ENCODE measurements at regions of chr15 and their contacts with region 1.

Region 1: DNA sequence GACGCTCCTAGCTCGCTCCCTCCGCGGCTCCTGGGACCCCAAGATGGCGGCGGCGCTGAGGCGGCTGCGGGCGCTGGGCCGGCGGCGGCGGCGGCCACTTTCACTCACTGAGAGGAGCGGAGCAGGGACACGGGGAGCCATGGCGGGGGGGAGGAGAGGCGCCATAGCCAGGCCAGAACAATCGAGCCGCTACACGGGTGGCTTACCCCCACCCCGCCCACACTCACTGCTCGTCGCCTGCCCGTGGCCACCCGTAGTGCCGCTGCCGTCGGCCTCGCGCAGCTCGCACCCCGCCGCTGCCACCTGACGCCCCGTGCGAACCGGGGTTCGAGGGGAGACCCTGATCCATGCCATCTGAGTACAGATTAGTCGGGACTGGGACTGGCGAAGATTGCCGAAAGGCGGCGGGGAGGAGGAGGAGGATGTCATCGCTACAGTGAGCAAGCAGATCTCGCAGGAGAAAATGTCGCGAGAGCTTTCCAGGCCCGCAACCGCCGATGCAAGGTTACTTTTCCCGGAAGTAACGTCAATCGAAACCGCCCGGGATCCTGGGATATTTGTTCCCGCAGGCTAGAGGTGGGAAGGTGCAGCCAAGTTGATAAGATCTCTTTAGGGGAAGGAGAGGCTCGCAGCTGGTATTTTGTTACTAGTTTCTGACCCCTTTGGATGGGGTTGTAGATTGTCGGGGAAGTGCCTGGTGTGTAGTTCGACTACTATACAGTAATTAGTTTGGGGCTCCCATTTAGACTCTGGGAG is at the start of gene INO80:
- DNase-seq: peak; percentile 93
- ATAC-seq: peak; percentile 70
- H3K4me3 Mint-ChIP-seq: peak within 1 kb of the TSS; percentile 97
- H3K27ac Mint-ChIP-seq: peak within 1 kb of the TSS; percentile 100
- H3K4me1 Mint-ChIP-seq: peaks cover 32% of the 10 kb centered on the region
- H3K27me3 Mint-ChIP-seq: no peaks in the 10 kb centered on the region
- CTCF ChIP-seq: no peak
- total RNA-seq, gene INO80: 34.8 and 38.8 TPM in 2 replicates

Region 2: GRCh38 chr15:40769274-40770146 is 346.8 kb before region 1 on chr15 and contains the start of gene C15orf62:
- CTCF ChIA-PET with region 1: no interaction called
- POLR2A ChIA-PET with region 1: no interaction called
- intact Hi-C with region 1: loop called (anchors 5 kb)
- DNase-seq: peak; percentile 81
- ATAC-seq: peak; percentile 84
- H3K4me3 Mint-ChIP-seq: peak within 1 kb of the TSS; percentile 82
- H3K27ac Mint-ChIP-seq: peak within 1 kb of the TSS; percentile 93
- H3K4me1 Mint-ChIP-seq: peaks cover 59% of the 10 kb centered on the region
- H3K27me3 Mint-ChIP-seq: no peaks in the 10 kb centered on the region
- CTCF ChIP-seq: no peak
- total RNA-seq, gene C15orf62: 5.7 and 6.5 TPM in 2 replicates

Region 3: DNA sequence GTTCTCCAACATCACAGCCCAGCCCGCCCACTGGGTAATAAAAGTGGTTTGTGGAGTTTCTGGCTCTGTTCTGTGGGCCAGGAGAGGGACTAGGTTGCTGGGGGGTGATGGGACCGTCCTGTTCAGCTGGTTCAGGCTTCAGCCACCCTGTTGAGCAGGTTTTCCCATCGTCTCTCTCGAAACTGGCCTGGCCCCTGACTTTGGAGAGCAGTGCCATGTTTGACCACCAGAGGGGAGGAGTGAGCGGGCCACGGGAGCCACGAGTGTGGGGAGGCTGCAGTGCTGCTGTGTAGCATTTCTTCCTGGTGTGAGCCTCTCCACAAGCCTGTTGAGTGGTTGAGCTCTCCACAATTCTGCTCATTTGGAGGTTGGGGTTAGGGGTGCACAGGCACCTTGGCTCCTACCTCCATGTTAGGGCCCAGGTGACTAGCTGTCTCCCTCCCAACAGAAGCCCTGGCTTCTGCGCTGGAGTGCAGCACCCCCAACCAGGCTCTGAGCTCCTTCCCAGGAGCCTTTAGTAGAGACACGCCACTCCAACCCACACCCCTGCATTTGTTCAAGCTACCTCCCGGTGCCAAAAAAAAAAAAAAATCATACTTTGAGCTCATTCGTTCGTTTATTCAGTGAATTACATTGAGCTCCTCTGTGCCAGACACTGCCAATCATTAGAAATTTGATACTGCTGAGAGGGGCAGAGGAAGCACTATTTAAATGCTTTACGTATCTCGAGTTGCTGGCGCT is 258.5 kb before region 1 on chr15:
- CTCF ChIA-PET with region 1: no interaction called
- POLR2A ChIA-PET with region 1: no interaction called
- intact Hi-C with region 1: no loop called
- DNase-seq: peak; percentile 80
- ATAC-seq: peak; percentile 98
- H3K4me3 Mint-ChIP-seq: no peak overlapping the region
- H3K27ac Mint-ChIP-seq: no peak overlapping the region
- H3K4me1 Mint-ChIP-seq: peaks cover 8% of the 10 kb centered on the region
- H3K27me3 Mint-ChIP-seq: no peaks in the 10 kb centered on the region
- CTCF ChIP-seq: no peak

Region 4: DNA sequence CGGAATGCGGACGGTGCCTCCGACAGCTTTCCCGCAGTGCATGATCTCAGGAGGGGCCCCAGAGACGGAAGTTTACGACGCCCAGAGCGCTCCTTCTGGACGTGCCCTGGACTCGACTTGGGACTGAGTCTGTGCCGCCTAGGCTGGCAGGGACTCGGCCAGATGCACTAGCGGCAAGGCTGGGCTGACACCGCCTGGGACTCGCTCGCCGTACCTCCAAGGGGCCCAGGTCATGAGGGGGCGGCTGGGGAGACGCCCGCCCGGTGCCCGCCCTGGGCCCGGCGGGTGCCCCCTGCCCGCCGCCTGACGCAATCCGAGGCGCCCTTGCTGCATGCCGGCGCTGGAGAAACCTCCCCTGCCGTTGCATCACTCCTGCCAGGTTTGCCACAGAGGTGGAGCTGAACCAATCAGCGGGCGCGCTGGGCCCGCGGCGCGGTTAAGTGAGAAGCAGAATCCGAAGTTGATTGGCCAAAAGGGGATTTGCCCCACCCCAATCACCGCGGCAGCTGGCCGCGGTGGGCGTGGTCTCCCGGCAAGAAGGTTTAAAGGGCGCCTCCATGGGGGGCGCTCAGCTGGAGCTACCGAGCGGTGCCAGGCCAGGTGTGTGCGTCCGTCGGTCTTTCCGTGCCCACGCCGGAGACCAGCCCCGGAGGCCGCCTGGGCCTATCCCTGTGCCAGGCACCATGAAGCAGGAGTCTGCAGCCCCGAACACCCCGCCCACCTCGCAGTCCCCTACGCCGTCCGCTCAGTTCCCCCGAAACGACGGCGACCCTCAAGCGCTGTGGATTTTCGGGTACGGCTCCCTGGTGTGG is 163.2 kb before region 1 on chr15 and contains the start of gene CHAC1:
- CTCF ChIA-PET with region 1: no interaction called
- POLR2A ChIA-PET with region 1: interaction called, 8 read pairs
- intact Hi-C with region 1: loop called (anchors 2 kb)
- DNase-seq: peak; percentile 88
- ATAC-seq: peak; percentile 94
- H3K4me3 Mint-ChIP-seq: peak within 1 kb of the TSS; percentile 93
- H3K27ac Mint-ChIP-seq: peak within 1 kb of the TSS; percentile 92
- H3K4me1 Mint-ChIP-seq: peaks cover 23% of the 10 kb centered on the region
- H3K27me3 Mint-ChIP-seq: peaks cover 7% of the 10 kb centered on the region
- CTCF ChIP-seq: no peak
- total RNA-seq, gene CHAC1: 22.3 and 27.3 TPM in 2 replicates

Region 5: GRCh38 chr15:41043276-41043951 is 72.9 kb before region 1 on chr15:
- CTCF ChIA-PET with region 1: no interaction called
- POLR2A ChIA-PET with region 1: no interaction called
- intact Hi-C with region 1: no loop called
- DNase-seq: no peak
- ATAC-seq: no peak
- H3K4me3 Mint-ChIP-seq: no peak overlapping the region
- H3K27ac Mint-ChIP-seq: no peak overlapping the region
- H3K4me1 Mint-ChIP-seq: peaks cover under 1% of the 10 kb centered on the region
- H3K27me3 Mint-ChIP-seq: no peaks in the 10 kb centered on the region
- CTCF ChIP-seq: no peak

Region 6: GRCh38 chr15:41194444-41194843 is 78.2 kb after region 1 on chr15:
- CTCF ChIA-PET with region 1: no interaction called
- POLR2A ChIA-PET with region 1: no interaction called
- intact Hi-C with region 1: no loop called
- DNase-seq: no peak
- ATAC-seq: no peak
- H3K4me3 Mint-ChIP-seq: no peak overlapping the region
- H3K27ac Mint-ChIP-seq: no peak overlapping the region
- H3K4me1 Mint-ChIP-seq: no peaks in the 10 kb centered on the region
- H3K27me3 Mint-ChIP-seq: no peaks in the 10 kb centered on the region
- CTCF ChIP-seq: no peak

Region 7: GRCh38 chr15:41331833-41332787 is 215.8 kb after region 1 on chr15 and contains the start of gene OIP5:
- CTCF ChIA-PET with region 1: no interaction called
- POLR2A ChIA-PET with region 1: interaction called, 6 read pairs
- intact Hi-C with region 1: loop called (anchors 1 kb)
- DNase-seq: peak; percentile 88
- ATAC-seq: peak; percentile 94
- H3K4me3 Mint-ChIP-seq: peak within 1 kb of the TSS; percentile 100
- H3K27ac Mint-ChIP-seq: peak within 1 kb of the TSS; percentile 97
- H3K4me1 Mint-ChIP-seq: peaks cover 31% of the 10 kb centered on the region
- H3K27me3 Mint-ChIP-seq: no peaks in the 10 kb centered on the region
- CTCF ChIP-seq: no peak
- total RNA-seq, gene OIP5: 0.62 and 1.4 TPM in 2 replicates

Region 8: DNA sequence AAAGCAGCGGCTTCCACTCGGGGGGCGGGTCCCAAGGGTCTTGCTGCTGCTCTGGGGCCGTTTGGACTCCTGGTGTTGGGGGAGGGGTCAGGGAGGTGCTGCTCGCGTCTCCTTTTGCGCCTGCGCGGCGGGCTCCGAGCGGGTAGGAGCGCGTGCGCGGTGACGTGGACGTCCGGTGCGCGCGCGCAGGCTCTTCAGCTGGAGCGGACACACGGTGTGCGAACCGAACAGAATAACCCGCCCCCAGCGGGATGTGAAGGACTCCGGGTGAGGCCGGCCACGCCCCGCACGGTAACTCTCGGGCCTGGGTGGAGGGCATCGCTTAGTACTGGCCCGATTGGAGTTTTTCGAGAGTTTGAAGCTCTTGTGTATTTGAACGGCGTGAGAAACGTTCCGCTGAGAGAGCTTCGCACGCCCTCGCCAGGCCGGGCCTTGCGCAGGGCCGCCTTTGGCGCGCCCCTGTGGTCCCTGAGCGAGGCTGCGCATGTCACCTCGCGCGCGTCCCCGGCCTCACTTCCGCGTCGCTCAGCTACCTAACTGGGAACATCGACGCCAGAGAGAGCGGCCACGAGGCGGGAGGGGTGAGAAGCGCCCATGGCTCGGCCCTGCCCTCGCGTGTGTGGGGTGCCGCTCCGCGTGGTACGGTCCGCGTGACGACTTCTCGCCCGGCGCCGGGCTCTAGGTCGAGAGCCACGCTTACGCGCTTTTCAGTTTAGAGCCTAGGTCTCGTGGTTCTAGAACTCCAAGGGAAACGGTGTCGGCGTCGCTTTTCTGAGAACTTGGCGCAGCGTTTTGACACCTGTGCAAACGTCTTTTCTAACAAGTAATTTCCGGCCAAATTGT is 544.2 kb after region 1 on chr15 and contains the start of gene MGA:
- CTCF ChIA-PET with region 1: no interaction called
- POLR2A ChIA-PET with region 1: no interaction called
- intact Hi-C with region 1: loop called (anchors 2 kb)
- DNase-seq: peak; percentile 92
- ATAC-seq: peak; percentile 84
- H3K4me3 Mint-ChIP-seq: peak within 1 kb of the TSS; percentile 91
- H3K27ac Mint-ChIP-seq: peak within 1 kb of the TSS; percentile 91
- H3K4me1 Mint-ChIP-seq: peaks cover 51% of the 10 kb centered on the region
- H3K27me3 Mint-ChIP-seq: peaks cover 2% of the 10 kb centered on the region
- CTCF ChIP-seq: no peak
- total RNA-seq, gene MGA: 49.9 and 58.3 TPM in 2 replicates

Measured in activated B cell treated with CpG ODN at 0.5 μM for 24 hours (primary cell).